HAP-1 (cell line): ENCODE measurements at regions of chr12 and their contacts with region 1.

Region 1: GRCh38 chr12:84842406-84843013 is 70.1 kb downstream of the SLC6A15 start:
- DNase-seq: peak; percentile 67 to 77
- H3K4me3 ChIP-seq: no peak overlapping the region
- H3K4me1 ChIP-seq: peaks cover 5% of the 10 kb centered on the region
- H3K27me3 ChIP-seq: no peaks in the 10 kb centered on the region

Region 2: DNA sequence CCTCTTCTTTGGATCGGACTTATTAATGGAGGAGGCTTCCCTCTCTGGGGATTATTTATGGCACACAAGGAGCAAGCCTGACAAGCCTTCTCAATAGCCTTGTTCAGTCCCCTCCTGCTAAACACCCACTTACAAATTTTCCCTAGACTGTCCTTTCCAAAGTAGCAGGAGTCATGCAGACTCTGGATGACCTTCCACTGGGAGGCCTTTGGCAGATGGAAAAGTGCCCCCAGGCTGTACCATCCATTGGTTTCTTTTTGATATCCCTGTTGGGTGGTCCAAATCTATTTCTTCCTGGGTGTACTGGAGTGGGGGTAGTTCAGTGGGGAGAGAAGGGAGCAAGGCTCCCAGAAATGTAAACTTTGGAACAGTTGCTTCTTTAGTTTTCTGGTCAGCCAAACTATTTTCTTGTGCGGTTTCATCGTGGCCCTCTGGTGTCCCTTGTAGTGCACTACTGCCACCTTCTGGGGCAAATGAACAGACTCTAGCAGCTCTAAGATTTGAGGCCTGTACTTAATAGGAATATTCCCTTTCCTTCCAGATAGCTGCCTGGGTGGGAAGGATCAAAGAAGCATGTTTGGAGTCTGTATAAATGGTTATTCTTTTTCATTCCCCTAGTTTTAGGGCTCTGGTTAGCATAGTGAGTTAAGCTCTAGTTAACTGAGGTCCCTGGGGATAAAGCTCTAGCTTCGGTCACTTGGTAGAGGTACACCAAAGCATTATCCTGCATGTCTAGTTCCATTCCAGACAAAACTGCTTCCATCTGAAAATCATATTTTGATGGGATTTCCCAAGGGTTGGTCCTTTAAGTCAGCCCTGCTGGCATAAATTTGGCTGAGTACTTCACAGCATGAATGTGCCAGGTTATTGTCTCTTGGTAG is 339.4 kb before region 1 on chr12:
- in situ Hi-C with region 1: loop called (anchors 25 kb)
- DNase-seq: peak; percentile 68 to 80
- H3K4me3 ChIP-seq: no peak overlapping the region
- H3K4me1 ChIP-seq: peaks cover 9% of the 10 kb centered on the region
- H3K27me3 ChIP-seq: no peaks in the 10 kb centered on the region

Region 3: GRCh38 chr12:84891106-84891838 is 48.8 kb after region 1 on chr12:
- in situ Hi-C with region 1: no loop called
- DNase-seq: no peak
- H3K4me3 ChIP-seq: no peak overlapping the region
- H3K4me1 ChIP-seq: no peaks in the 10 kb centered on the region
- H3K27me3 ChIP-seq: no peaks in the 10 kb centered on the region; the same call in 1 of the 2 replicates

Region 4: DNA sequence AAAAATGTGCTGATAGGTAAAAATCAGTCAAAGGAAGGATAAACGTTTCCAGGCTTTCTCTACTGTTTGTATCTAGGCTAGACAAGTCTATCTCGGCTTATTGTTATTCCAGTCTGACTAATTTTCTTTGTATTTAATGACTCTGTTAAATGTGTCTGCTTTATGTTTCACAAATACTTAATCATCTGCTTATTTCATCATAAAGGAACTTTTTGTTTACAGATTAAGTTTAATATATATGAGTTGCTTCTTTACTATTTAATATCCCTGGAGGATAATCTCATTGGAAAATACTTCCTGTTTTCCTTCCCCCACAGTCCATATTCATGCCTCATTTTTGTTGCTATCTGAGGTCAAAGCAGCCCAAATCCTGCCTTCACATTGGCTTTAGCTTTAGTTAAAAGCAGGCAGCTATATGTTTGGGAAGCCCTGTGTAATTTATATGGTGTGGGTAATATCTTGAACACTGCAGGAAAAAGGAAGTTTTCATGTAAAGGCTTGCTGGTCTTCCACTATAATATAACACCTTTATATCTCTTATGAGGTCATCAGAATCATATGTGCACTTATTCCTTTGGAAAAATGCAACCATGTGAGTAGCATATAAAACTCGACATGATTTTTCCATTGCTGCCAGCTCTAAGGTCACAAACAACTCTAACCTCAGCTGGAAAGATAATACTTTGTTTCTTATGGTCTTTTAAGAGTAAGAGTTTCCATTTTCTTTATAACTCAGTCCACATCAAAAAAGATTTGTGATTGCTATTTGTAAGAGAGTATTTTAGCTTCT is 514.3 kb after region 1 on chr12:
- in situ Hi-C with region 1: no loop called
- DNase-seq: peak in 1 of 2 experiments; percentile 12
- H3K4me3 ChIP-seq: no peak overlapping the region
- H3K4me1 ChIP-seq: peaks cover 12% of the 10 kb centered on the region
- H3K27me3 ChIP-seq: no peaks in the 10 kb centered on the region; the same call in none of the 2 replicates